Cardiac septum (tissue), 1 donor: ENCODE measurements at regions of chr1 and their contacts with region 1.

Region 1: DNA sequence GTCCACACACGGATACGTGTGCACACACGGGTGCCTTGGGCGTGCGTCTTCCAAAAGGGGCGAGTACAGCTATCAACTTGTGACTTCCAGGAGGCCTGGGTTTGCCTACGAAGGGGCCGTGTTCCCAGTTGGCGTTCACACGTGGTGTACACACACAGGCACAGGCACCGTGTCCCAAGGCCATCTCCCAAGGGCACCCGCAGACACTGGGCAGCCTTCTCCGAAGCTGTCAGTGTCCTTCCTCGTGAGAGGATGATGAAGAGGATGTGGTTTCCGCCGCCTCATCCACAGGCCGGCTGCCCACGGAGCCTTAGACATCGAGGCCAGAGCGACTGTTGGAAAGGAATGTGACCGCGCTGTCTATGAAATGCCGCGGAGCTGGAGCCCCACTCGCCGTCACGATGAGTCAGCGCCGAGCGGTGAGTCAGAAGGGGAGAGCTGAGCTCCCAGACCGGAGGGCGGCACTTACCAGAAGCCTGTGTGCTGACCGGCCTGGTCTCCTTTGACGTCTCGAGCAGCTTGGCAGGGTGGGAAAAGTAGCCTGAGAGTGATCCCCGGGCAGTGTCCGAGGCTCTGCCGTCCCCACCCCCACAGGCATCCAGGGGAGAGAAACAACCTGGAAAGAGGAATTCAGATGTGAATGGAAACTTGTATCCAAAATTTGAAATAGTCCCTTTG is 141.4 kb upstream of the ARHGEF16 start:
- DNase-seq: peak; percentile 94

Region 2: DNA sequence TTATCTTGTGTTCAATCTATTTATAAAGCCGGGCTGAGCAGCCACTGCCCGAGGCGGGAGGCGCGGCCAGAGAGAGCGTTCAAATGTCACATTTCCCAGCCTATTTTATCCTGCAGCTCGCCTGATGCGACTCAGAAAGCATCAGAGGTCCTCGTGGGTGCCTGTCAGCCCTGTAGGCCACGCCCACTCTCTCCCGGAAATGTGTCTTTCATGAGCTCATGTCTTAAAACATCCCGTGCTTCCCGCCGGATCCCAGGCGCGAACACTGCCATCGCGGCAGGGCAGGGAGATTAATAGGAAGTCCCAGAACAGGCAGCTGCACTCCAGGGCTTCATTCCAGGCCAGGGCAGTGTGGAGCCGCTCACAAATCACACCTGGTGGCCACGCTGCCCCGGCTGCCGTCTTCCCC is 126.5 kb before region 1 on chr1:
- intact Hi-C with region 1: loop called (anchors 5 kb)
- DNase-seq: peak; percentile 93

Region 3: GRCh38 chr1:3349161-3349967 is 36.3 kb after region 1 on chr1:
- intact Hi-C with region 1: loop called (anchors 1 kb)
- DNase-seq: peak; percentile 91

Region 4: GRCh38 chr1:3369446-3370076 is 56.5 kb after region 1 on chr1:
- intact Hi-C with region 1: loop called (anchors 2 kb)
- DNase-seq: no peak

Region 5: GRCh38 chr1:3393024-3393986 is 80.3 kb after region 1 on chr1:
- intact Hi-C with region 1: loop called (anchors 5 kb)
- DNase-seq: no peak

Region 6: DNA sequence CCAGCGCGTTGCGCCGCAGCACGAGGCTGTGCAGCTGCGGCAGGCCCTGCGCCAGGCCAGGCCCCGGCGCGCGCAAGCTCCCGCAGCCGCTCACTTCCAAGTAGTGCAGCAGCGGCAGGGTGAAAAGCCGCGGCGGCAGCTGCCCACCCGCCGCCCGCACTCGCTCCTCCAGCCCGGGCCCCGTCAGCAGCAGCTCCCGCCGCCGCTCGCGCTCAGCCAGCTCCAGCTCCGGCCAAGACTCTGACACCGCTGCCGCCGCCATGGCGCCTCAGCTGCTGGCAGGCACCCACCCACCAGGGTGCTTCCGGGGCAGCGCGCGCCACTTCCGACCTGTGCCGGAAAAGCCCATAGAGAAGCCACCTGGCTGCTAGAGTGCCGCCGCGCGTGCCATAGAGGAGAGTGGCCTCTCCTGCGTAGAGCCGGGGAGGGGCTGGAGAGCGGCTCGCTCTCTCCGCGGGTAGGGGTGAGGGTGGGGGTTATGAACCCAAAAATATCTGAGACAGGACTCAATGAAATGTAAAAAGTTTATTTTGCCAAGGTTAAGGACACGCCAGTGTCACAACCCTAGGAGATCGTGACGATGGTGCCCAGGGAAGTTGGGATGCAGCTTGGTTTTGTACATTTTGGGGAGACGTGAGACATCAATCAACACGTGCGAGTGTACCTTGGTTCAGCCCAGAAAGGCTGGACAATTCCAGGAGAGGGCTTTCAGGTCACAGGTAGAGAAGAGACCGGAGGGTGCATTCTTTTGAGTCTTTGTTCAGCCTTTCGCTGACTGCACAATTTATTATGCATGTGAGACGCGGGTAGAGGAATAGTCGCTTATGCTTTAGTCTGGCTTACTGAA is 483.4 kb after region 1 on chr1 and contains the start of gene LRRC47:
- intact Hi-C with region 1: no loop called
- DNase-seq: peak; percentile 98
- total RNA-seq, gene LRRC47: 63.1 TPM

Region 7: GRCh38 chr1:3968851-3969250 is 655.8 kb after region 1 on chr1:
- intact Hi-C with region 1: no loop called
- DNase-seq: no peak